Activated CD4-positive, alpha-beta T cell treated with anti-CD3 and anti-CD28 coated beads for 36 hours (primary cell): ENCODE measurements at regions of chr20 and their contacts with region 1.

Region 1: DNA sequence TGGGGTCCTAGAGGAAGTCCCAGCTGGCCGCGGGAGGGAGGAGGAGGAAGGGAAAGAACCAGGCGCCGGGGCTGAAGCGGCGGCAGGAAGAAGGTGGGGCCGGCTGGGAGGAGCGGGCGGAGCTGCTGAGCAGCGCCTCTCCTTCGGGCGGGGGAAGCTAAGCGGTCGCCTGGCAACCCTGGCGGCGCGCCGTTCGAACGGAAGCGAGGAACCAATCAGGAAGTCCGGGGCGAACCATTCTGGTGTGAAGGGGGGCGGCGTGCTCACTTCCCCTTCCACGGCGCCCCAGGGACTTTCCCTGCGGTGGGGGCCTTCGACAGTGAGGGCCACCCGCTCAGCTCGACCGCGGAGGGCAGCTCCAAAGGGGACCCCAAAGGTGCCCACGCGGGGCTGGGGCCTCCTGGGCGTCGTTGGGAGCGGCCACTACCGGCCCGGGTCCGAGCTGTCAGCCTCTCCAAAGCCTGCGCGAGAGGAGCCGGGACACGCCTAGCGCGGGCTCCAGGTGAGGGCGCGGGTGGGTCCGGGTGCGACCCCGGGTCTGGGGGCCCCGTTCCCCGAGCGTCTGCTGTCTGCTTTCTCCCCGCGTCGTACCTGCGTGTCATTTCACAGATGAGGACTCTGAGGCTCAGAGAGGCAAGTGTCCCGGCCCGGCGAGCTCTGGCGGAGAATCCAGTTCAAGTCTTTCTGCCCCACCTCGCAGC is at the start of gene FAM110A:
- DNase-seq: peak; percentile 98
- ATAC-seq: peak; percentile 89
- H3K4me3 Mint-ChIP-seq: peak within 1 kb of the TSS; percentile 88
- H3K27ac Mint-ChIP-seq: peak within 1 kb of the TSS; percentile 86
- H3K4me1 Mint-ChIP-seq: peaks cover 38% of the 10 kb centered on the region
- H3K27me3 Mint-ChIP-seq: no peaks in the 10 kb centered on the region
- total RNA-seq, gene FAM110A: 15.5 TPM

Region 2: GRCh38 chr20:543369-544152 is 290.0 kb before region 1 on chr20 and contains the start of gene CSNK2A1:
- CTCF ChIA-PET with region 1: interaction called, 3 read pairs
- POLR2A ChIA-PET with region 1: no interaction called
- intact Hi-C with region 1: loop called (anchors 1 to 5 kb)
- DNase-seq: peak; percentile 97
- ATAC-seq: peak; percentile 97
- H3K4me3 Mint-ChIP-seq: peak within 1 kb of the TSS; percentile 94
- H3K27ac Mint-ChIP-seq: peak within 1 kb of the TSS; percentile 96
- H3K4me1 Mint-ChIP-seq: peaks cover 49% of the 10 kb centered on the region
- H3K27me3 Mint-ChIP-seq: no peaks in the 10 kb centered on the region
- total RNA-seq, gene CSNK2A1: 179 to 254 TPM

Region 3: DNA sequence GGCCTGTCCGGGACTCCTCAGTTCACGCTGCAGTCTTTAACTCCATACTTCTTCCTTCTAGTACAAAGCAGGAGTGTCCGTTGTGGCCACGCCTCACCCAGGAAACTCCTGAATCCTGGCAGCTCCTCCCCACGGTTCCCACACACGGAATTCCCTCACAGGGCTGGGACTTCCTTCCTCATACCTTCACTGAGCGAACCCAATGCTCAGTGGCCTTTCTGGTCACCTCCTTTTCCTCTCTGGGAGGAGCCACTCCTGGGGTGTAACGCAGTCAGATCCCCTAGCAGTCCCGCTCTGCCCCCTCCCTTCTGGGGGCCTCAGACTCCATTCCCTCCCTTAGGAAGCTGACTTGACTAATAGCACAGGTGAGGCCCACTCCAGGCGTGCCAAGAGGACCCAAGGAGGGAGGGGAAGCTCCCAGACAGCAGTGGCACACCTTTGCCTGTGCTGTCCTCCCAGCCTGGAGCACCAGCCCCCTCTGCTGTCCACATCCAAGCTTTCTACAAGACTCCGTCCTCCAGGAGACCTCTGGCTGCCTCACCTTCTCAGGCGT is 65.1 kb before region 1 on chr20 and contains the start of gene SLC52A3:
- CTCF ChIA-PET with region 1: no interaction called
- POLR2A ChIA-PET with region 1: no interaction called
- intact Hi-C with region 1: no loop called
- DNase-seq: peak; percentile 25
- ATAC-seq: no peak
- H3K4me3 Mint-ChIP-seq: no peak within 1 kb of the TSS
- H3K27ac Mint-ChIP-seq: no peak within 1 kb of the TSS
- H3K4me1 Mint-ChIP-seq: no peaks in the 10 kb centered on the region
- H3K27me3 Mint-ChIP-seq: peaks cover 6% of the 10 kb centered on the region
- total RNA-seq, gene SLC52A3: not detected

Region 4: GRCh38 chr20:815914-816606 is 17.5 kb before region 1 on chr20:
- CTCF ChIA-PET with region 1: interaction called, 8 read pairs
- POLR2A ChIA-PET with region 1: no interaction called
- intact Hi-C with region 1: loop called in 1 of 2 experiments (anchors 1 kb)
- DNase-seq: peak; percentile 80
- ATAC-seq: peak; percentile 72
- H3K4me3 Mint-ChIP-seq: no peak overlapping the region
- H3K27ac Mint-ChIP-seq: no peak overlapping the region
- H3K4me1 Mint-ChIP-seq: no peaks in the 10 kb centered on the region
- H3K27me3 Mint-ChIP-seq: peaks cover 11% of the 10 kb centered on the region

Region 5: GRCh38 chr20:884983-885952 is 51.7 kb after region 1 on chr20:
- CTCF ChIA-PET with region 1: no interaction called
- POLR2A ChIA-PET with region 1: no interaction called
- intact Hi-C with region 1: loop called (anchors 5 kb)
- DNase-seq: peak; percentile 34
- ATAC-seq: no peak
- H3K4me3 Mint-ChIP-seq: no peak overlapping the region
- H3K27ac Mint-ChIP-seq: no peak overlapping the region
- H3K4me1 Mint-ChIP-seq: peaks cover 12% of the 10 kb centered on the region
- H3K27me3 Mint-ChIP-seq: peaks cover 16% of the 10 kb centered on the region

Region 6: DNA sequence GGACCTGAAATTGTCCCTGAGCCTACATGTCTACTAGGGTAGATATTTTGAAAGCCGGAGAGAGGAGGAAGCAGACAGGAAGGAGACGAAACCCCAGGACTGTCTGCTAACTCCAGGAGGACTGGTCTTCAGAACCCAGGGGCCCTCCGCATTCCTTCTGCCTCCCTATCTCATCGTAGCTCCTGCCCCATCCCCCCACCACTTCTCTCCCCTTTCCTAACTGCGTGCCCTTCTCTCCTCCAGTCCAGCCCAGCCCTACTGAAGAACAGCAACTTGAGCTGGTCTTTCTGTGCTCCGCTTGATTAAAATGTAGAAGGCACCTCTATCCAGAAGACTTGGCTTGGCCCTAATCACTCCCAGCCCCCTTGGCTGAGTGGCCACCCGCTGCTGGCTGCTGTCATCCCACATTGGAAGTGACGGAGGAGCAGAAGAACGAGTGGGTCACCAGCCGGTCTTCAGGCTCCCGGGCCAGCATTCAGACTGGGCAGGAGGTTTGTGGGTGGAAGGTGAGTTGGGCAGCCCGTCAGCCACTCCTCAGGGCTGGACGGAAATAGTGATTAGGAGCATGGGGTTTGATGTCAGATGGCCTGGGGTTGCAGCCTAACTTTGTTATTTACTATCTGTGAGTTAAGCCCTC is 111.3 kb after region 1 on chr20:
- CTCF ChIA-PET with region 1: no interaction called
- POLR2A ChIA-PET with region 1: no interaction called
- intact Hi-C with region 1: no loop called
- DNase-seq: no peak
- ATAC-seq: no peak
- H3K4me3 Mint-ChIP-seq: no peak overlapping the region
- H3K27ac Mint-ChIP-seq: no peak overlapping the region
- H3K4me1 Mint-ChIP-seq: no peaks in the 10 kb centered on the region
- H3K27me3 Mint-ChIP-seq: peaks cover 7% of the 10 kb centered on the region

Region 7: DNA sequence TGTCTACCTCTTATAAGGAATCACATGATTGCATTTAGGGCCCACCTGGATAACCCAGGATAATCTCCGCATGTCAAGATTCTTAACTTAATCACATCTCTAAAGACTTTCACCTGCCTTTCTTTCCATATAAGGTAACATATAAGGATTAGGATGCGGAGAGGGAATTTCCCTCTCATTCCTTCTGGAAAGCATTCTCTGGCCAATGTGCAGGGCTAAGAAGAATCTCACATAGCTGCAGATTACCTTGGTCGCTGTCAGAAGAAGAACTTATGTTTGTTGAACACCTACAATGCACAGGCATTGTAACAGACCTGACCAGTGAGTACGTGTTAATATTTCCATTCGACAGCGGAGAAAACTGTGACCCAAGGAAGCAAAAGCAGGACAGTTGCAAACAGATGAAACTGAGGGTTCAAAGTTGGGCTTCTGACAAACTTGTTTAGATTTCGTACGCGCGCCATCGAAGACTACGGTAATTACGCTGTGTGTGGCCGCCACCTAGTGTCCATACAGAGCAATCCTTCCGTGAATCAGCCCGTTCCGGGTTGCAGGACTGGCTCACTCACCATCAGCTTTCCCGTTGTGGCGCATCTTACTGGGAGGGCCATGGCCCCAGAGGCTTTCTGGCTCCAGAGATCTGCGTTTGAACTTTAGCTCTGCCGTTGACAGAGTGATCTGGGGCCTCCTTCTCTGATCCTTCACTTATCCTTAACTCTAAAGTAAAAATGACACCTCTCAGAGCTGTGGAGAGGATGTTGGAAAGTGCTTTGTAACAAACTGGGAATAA is 379.2 kb after region 1 on chr20:
- CTCF ChIA-PET with region 1: no interaction called
- POLR2A ChIA-PET with region 1: no interaction called
- intact Hi-C with region 1: loop called in 1 of 2 experiments (anchors 5 kb)
- DNase-seq: peak; percentile 86
- ATAC-seq: peak; percentile 66
- H3K4me3 Mint-ChIP-seq: no peak overlapping the region
- H3K27ac Mint-ChIP-seq: no peak overlapping the region
- H3K4me1 Mint-ChIP-seq: peaks cover 36% of the 10 kb centered on the region
- H3K27me3 Mint-ChIP-seq: peaks cover 3% of the 10 kb centered on the region

Region 8: DNA sequence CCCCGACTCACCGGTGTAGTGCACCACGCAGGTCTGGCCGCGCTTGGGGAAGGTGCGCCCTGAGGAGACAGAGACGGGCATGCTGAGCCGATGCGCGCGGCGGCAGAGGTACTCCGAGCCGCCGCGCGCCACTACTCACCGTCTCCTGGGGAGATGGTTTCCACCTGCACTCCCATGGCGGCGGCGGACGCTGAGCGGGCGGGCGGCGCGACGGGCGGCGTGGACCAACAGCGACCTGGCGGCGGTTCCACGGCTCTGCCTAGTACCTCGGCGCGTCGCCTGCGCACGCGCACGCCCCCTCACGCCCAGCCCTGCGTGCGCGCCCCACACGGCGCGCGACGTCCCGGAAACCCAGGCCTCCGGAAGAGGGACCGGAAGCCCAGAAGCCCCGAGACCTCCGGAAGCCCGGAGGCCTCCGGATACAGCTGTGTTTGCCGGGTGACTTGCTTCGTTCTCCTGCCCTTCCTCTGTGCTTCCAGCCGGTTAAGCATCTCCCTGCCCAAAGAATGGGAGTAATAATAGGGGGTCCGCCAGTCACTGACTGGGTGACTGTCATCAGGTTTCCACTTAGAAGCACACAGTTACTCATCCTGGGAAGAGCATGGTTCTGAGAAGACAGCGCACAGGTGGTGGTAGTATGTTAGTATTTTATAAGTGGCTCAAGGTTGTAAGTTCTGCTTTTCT is 559.4 kb after region 1 on chr20 and contains the start of gene FKBP1A:
- CTCF ChIA-PET with region 1: no interaction called
- POLR2A ChIA-PET with region 1: no interaction called
- intact Hi-C with region 1: loop called in 1 of 2 experiments (anchors 5 kb)
- DNase-seq: peak; percentile 95
- ATAC-seq: peak; percentile 82
- H3K4me3 Mint-ChIP-seq: peak within 1 kb of the TSS; percentile 93
- H3K27ac Mint-ChIP-seq: peak within 1 kb of the TSS; percentile 94
- H3K4me1 Mint-ChIP-seq: peaks cover 56% of the 10 kb centered on the region
- H3K27me3 Mint-ChIP-seq: no peaks in the 10 kb centered on the region
- total RNA-seq, gene FKBP1A: 265 to 316 TPM